ENCODE measurements at regions of chr1 and their contacts with region 1.

Region 1: DNA sequence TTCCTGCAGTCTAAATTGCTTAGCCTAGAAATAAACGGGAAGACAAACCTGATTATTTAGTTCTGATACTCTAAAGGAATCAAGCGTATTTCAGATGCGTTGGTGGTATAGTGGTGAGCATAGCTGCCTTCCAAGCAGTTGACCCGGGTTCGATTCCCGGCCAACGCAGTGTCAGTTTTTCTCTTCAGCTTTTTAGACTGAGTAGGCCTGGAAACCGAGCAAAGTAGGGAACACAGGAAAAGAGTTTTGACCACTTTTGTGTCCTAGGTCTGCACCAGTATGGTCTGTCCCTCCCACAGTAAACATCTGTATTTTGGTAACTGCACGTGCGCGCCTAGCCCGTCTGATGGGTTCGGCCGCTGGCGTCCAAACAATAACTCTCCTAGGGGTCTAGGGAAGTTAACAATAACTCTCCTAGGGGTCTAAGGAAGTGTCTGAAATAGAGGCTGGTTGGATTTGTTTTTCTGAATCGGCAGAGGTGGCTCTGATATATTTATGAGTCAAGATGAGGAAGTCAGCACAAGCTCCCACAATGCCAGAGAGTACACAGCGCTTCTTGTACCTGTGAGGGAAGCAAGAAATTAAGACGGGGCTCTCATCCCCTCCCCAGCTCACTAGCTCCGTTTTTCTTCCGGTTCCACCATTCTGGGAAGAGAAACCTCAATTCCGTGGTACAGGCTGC is 15.6 kb upstream of the HJV start:
- DNase-seq: peak; percentile 45 to 83 (median 65)
- ATAC-seq: peak; percentile 61 to 75 (median 74)
- H3K4me3 ChIP-seq: peak overlapping the region; percentile 80 to 91
- H3K4me3 Mint-ChIP-seq: peak overlapping the region; percentile 96
- H3K27ac ChIP-seq: peak overlapping the region; percentile 68
- H3K27ac Mint-ChIP-seq: peak overlapping the region; percentile 97
- H3K4me1 ChIP-seq: peaks cover 7 to 32% of the 10 kb centered on the region in 2 experiments
- H3K4me1 Mint-ChIP-seq: peaks cover 32 to 45% (median 39%) of the 10 kb centered on the region in 3 donors
- H3K27me3 ChIP-seq: no peaks in the 10 kb centered on the region
- H3K27me3 Mint-ChIP-seq: peaks cover 0 to 6% of the 10 kb centered on the region in 2 donors

Region 2: DNA sequence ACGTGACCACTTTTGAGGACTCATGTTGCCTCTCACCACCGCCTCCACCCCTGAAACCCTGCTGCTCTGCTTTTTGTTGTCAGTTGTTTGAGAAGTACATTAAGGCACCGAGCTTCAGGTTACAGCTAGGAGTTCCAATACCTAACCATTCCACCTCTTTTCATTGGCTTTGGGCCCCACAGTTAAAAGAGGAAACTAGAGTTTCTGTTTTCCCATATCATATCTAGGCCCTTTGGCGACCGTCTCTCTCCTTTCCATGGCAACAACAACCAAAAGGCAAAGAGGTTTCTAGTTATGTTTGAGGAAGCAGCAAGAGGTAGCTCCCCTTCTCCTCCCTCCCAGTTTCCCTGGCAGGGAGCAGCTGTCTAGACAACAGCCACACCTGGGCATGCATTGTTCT is 157.3 kb before region 1 on chr1:
- CTCF ChIA-PET with region 1: no interaction called
- POLR2A ChIA-PET with region 1: no interaction called
- DNase-seq: no peak
- ATAC-seq: no peak
- H3K4me3 ChIP-seq: no peak overlapping the region
- H3K4me3 Mint-ChIP-seq: no peak overlapping the region
- H3K27ac ChIP-seq: no peak overlapping the region
- H3K27ac Mint-ChIP-seq: no peak overlapping the region
- H3K4me1 ChIP-seq: no peaks in the 10 kb centered on the region
- H3K4me1 Mint-ChIP-seq: peaks cover 3% of the 10 kb centered on the region in 3 donors
- H3K27me3 ChIP-seq: peaks cover under 1 to 17% of the 10 kb centered on the region in 2 experiments
- H3K27me3 Mint-ChIP-seq: peaks cover 17 to 18% of the 10 kb centered on the region in 2 donors

Region 3: GRCh38 chr1:145963995-145964901 is 72.9 kb before region 1 on chr1 and contains the starts of genes ANKRD34A and POLR3GL:
- CTCF ChIA-PET with region 1: interaction called, 11 to 15 read pairs
- POLR2A ChIA-PET with region 1: interaction called, 3 read pairs
- DNase-seq: peak; percentile 80 to 98 (median 92)
- ATAC-seq: peak; percentile 90 to 91 (median 90)
- H3K4me3 ChIP-seq: peak within 1 kb of the TSS; percentile 78 to 89
- H3K4me3 Mint-ChIP-seq: peak within 1 kb of the TSS; percentile 88 to 95 (median 92)
- H3K27ac ChIP-seq: peak within 1 kb of the TSS; percentile 70
- H3K27ac Mint-ChIP-seq: peak within 1 kb of the TSS; percentile 94 to 99
- H3K4me1 ChIP-seq: peaks cover 32 to 54% of the 10 kb centered on the region in 2 experiments
- H3K4me1 Mint-ChIP-seq: peaks cover 54 to 72% (median 68%) of the 10 kb centered on the region in 3 donors
- H3K27me3 ChIP-seq: no peaks in the 10 kb centered on the region
- H3K27me3 Mint-ChIP-seq: no peaks in the 10 kb centered on the region
- total RNA-seq, gene ANKRD34A: 0.68 to 3.5 (median 1.7) TPM
- total RNA-seq, gene POLR3GL: 30.9 to 41.7 (median 38.3) TPM

Region 4: DNA sequence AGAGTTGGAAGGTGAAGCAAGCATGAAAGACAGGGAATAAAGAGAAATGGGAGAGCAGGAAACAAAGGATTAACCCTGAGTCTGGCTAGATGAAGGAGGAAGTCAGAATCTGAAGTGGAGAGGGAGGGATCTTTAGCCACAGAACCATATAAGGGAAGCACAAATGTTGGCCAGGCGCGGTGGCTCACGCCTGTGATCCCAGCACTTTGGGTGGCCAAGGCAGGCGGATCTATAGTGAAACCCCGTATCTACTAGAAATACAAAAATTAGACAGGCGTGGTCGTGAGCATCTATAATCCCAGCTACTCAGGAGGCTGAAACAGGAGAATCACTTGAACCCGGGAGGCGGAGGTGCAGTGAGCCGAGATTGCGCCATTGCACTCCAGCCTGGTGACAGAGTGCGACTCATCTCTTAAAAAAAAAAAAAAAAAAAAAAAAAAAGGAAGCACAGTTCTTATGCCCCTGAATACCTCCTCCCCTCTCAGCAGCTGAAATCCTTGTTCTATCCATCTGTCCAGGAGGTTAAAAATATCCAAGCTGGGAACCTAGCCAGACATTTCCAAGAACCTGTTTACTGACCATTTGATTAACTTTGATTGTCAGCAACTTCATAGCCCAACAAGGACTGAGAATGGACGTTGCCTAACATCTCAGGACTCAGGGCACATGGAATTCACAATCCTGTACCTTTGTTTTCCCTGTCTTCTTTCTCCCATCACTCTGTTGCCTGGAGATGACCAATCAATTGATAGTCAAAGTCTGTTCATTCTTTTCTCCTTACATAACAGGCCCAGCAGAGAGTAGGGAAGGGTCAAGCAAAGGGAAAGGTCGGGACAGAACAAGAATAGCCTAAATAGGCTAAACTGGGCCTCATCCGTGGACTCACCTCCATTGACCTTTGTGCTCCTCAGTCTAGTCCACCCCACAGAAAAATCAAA is 51.3 kb before region 1 on chr1:
- CTCF ChIA-PET with region 1: no interaction called
- POLR2A ChIA-PET with region 1: no interaction called
- DNase-seq: no peak
- ATAC-seq: no peak
- H3K4me3 ChIP-seq: no peak overlapping the region
- H3K4me3 Mint-ChIP-seq: peak overlapping the region in 2 of 3 donors; percentile 18 to 20
- H3K27ac ChIP-seq: peak overlapping the region; percentile 46
- H3K27ac Mint-ChIP-seq: peak overlapping the region; percentile 91 to 94
- H3K4me1 ChIP-seq: peaks cover 42 to 76% of the 10 kb centered on the region in 2 experiments
- H3K4me1 Mint-ChIP-seq: peaks cover 46 to 85% (median 51%) of the 10 kb centered on the region in 3 donors
- H3K27me3 ChIP-seq: no peaks in the 10 kb centered on the region
- H3K27me3 Mint-ChIP-seq: no peaks in the 10 kb centered on the region

Region 5: GRCh38 chr1:146019231-146020057 is 17.7 kb before region 1 on chr1:
- CTCF ChIA-PET with region 1: interaction called, 4 to 11 read pairs
- POLR2A ChIA-PET with region 1: no interaction called
- DNase-seq: peak in 1 of 35 experiments; percentile 10
- ATAC-seq: peak; percentile 44 to 52 (median 45)
- H3K4me3 ChIP-seq: no peak overlapping the region
- H3K4me3 Mint-ChIP-seq: peak overlapping the region in 1 of 3 donors; percentile 39
- H3K27ac ChIP-seq: no peak overlapping the region
- H3K27ac Mint-ChIP-seq: peak overlapping the region in 1 of 2 donors; percentile 2
- H3K4me1 ChIP-seq: peaks cover 0 to 11% of the 10 kb centered on the region in 2 experiments
- H3K4me1 Mint-ChIP-seq: peaks cover 5 to 11% (median 6%) of the 10 kb centered on the region in 3 donors
- H3K27me3 ChIP-seq: peaks cover 2 to 36% of the 10 kb centered on the region in 2 experiments
- H3K27me3 Mint-ChIP-seq: peaks cover 39 to 49% of the 10 kb centered on the region in 2 donors

Region 6: DNA sequence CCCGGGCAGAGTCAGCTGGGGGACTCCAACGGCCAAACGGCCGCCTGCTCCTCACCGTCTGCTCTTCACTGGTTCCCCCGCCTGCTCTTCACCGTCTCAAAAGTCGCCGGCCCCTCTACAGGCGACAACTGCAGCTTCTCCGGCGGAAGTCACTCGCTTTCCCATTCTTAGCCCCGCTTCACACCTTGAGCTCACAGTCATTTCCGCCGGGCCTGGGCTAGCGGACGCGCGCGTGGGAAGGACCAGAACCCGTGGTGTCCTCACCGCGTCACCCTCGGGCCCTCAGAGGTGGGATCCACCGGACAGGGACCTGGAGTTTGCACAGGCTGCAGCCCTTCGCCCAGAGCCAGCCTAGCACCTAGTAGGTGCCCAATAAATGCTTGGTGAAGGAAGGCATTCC is 12.3 kb after region 1 on chr1:
- CTCF ChIA-PET with region 1: interaction called, 3 to 6 read pairs
- POLR2A ChIA-PET with region 1: interaction called, 3 to 13 read pairs
- DNase-seq: peak in 2 of 35 experiments; percentile 15 to 21
- ATAC-seq: peak in 1 of 4 experiments; percentile 18
- H3K4me3 ChIP-seq: no peak overlapping the region
- H3K4me3 Mint-ChIP-seq: no peak overlapping the region
- H3K27ac ChIP-seq: no peak overlapping the region
- H3K27ac Mint-ChIP-seq: peak overlapping the region; percentile 43 to 53
- H3K4me1 ChIP-seq: peaks cover 0 to 7% of the 10 kb centered on the region in 2 experiments
- H3K4me1 Mint-ChIP-seq: peaks cover 13 to 26% (median 24%) of the 10 kb centered on the region in 3 donors
- H3K27me3 ChIP-seq: no peaks in the 10 kb centered on the region
- H3K27me3 Mint-ChIP-seq: no peaks in the 10 kb centered on the region

Measured in T-cell (primary cell).